CD4-positive, alpha-beta T cell (primary cell): ENCODE measurements at regions of chr12 and their contacts with region 1.

Region 1: DNA sequence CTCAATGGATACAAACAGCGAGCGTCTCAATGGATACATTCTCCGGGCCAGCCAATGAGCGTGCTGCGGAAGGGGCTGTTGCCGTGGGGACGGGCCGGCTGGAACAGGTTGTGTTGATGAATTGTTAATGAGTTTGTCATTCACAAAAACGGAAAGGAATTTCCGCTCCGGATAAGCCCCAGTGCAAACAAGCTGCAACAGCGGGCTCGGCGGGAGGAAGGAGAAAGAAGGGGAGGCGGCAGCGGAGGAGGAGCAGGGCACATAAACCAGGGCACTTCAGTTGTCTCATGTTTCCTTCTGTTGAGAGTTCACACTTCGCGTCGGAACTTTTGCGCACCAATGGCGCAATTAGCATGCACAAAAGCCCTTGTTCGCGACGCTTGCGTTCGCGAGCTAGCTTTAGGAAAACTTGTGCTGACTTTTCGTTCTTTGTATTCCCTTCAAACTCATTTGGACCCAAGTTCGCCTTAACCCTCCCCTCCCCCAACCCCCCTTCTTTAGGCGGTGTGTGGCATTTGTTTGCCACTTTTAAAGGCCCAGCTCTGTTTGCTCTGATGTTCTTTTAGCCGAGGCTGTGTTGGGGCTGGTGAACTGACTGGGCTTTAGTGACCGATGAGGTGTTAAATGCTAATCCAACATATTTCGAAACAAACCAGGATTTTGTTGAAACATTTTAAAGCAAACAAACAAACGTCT is at the start of gene DUSP6:
- DNase-seq: peak; percentile 64 to 93 (median 75)
- ATAC-seq: peak; percentile 76
- H3K4me3 ChIP-seq: peak within 1 kb of the TSS; percentile 78
- H3K4me3 Mint-ChIP-seq: peak within 1 kb of the TSS; percentile 94
- H3K27ac ChIP-seq: peak within 1 kb of the TSS in 1 of 2 donors; percentile 65
- H3K27ac Mint-ChIP-seq: peak within 1 kb of the TSS; percentile 88
- H3K4me1 ChIP-seq: peaks cover 51% of the 10 kb centered on the region
- H3K4me1 Mint-ChIP-seq: peaks cover 45% of the 10 kb centered on the region
- H3K27me3 ChIP-seq: no peaks in the 10 kb centered on the region
- H3K27me3 Mint-ChIP-seq: no peaks in the 10 kb centered on the region
- CTCF ChIP-seq: no peak
- total RNA-seq, gene DUSP6: 11.8 to 14.7 TPM

Region 2: DNA sequence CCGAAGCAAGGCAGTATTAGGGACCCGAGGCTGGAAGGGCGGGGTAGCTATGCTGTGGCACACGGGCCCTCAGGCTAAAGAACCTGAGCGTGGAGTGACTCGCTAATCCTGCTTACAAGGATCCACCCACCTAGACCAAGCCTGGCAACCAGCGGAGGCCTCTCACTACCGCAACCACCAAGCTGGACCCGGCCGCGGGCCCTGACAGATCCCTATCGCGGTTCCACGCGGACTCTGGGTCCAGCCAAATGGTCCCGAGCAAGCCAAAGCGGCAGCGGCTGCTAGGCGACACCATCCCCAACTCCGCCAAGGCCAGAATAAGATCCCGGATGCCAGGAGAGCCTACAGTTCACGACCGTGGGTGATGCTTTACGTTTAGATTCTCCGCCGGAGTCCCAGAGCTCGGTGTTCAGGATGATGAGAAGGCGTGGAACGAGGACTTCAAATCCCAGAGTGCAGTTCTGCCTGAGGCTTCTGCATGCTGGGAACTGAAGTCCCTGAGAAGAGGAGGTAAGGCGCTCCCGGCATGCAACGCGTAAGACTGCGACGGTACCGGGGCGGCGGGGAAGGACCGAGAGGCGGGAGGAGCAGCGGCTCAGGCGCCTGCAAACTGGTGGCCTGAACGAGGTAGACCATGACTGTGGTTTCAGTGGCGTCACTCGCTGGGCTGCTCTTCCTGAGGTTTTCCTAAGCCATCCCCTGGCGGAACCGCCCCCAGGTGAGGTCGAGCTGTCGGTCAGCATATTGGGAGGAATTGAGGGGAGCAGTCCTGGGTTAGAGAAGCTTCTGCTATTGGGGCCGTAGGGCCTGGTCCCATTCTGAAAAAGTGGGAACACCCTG is 1210.7 kb before region 1 on chr12 and contains the starts of genes CEP290 and TMTC3:
- CTCF ChIA-PET with region 1: no interaction called
- POLR2A ChIA-PET with region 1: no interaction called
- intact Hi-C with region 1: loop called in 1 of 2 experiments (anchors 5 kb)
- DNase-seq: peak; percentile 82 to 98 (median 88)
- ATAC-seq: peak; percentile 93
- H3K4me3 ChIP-seq: peak within 1 kb of the TSS; percentile 83
- H3K4me3 Mint-ChIP-seq: peak within 1 kb of the TSS; percentile 98
- H3K27ac ChIP-seq: peak within 1 kb of the TSS; percentile 82 to 84
- H3K27ac Mint-ChIP-seq: peak within 1 kb of the TSS; percentile 92
- H3K4me1 ChIP-seq: peaks cover 12% of the 10 kb centered on the region
- H3K4me1 Mint-ChIP-seq: peaks cover 69% of the 10 kb centered on the region
- H3K27me3 ChIP-seq: no peaks in the 10 kb centered on the region
- H3K27me3 Mint-ChIP-seq: no peaks in the 10 kb centered on the region
- CTCF ChIP-seq: no peak
- total RNA-seq, gene CEP290: 12.6 to 13.7 TPM
- total RNA-seq, gene TMTC3: 5.1 to 6.1 TPM

Region 3: DNA sequence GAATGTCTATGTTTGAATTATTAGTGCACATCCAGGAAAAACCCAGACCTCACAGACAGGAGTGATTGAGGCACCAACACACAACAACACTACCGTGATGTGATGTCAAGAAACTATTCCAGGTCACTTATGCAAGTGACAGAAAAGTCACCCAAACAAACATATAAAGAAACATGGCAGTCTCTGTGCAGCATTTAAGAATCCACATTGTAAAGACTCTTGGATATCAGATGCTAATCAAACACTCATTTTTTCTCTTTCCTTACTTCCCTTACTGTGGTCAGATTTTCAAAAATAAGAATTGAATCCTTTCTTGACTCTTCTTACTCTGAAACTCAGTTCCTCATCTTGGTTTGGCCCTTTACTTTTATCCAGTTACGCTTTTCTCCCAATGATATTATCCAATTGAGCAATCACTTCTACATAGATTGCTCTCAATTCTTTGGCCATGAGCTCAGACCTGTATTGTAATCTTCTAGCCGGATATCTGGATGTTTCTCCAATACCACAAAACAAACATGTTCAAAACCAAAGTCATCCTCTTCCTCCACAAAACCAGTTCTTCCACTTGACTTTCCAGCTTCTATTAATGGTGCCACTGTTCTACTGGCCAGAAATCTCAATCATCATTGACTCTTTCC is 115.8 kb before region 1 on chr12:
- CTCF ChIA-PET with region 1: no interaction called
- POLR2A ChIA-PET with region 1: interaction called, 7 read pairs
- intact Hi-C with region 1: loop called in 1 of 2 experiments (anchors 5 kb)
- DNase-seq: no peak
- ATAC-seq: no peak
- H3K4me3 ChIP-seq: no peak overlapping the region
- H3K4me3 Mint-ChIP-seq: peak overlapping the region; percentile 3
- H3K27ac ChIP-seq: no peak overlapping the region
- H3K27ac Mint-ChIP-seq: no peak overlapping the region
- H3K4me1 ChIP-seq: peaks cover 30% of the 10 kb centered on the region
- H3K4me1 Mint-ChIP-seq: peaks cover 85% of the 10 kb centered on the region
- H3K27me3 ChIP-seq: no peaks in the 10 kb centered on the region
- H3K27me3 Mint-ChIP-seq: no peaks in the 10 kb centered on the region
- CTCF ChIP-seq: no peak

Region 4: GRCh38 chr12:89280833-89281538 is 71.7 kb before region 1 on chr12:
- CTCF ChIA-PET with region 1: no interaction called
- POLR2A ChIA-PET with region 1: interaction called, 38 read pairs
- intact Hi-C with region 1: loop called (anchors 2 kb)
- DNase-seq: peak in 4 of 14 experiments; percentile 1 to 76 (median 46)
- ATAC-seq: peak; percentile 96
- H3K4me3 ChIP-seq: no peak overlapping the region
- H3K4me3 Mint-ChIP-seq: peak overlapping the region; percentile 50
- H3K27ac ChIP-seq: no peak overlapping the region
- H3K27ac Mint-ChIP-seq: peak overlapping the region; percentile 84
- H3K4me1 ChIP-seq: peaks cover 10% of the 10 kb centered on the region
- H3K4me1 Mint-ChIP-seq: peaks cover 48% of the 10 kb centered on the region
- H3K27me3 ChIP-seq: no peaks in the 10 kb centered on the region
- H3K27me3 Mint-ChIP-seq: no peaks in the 10 kb centered on the region
- CTCF ChIP-seq: no peak

Region 5: GRCh38 chr12:89524541-89525285 is 172.1 kb after region 1 on chr12 and contains the start of gene GALNT4:
- CTCF ChIA-PET with region 1: no interaction called
- POLR2A ChIA-PET with region 1: interaction called, 10 read pairs
- intact Hi-C with region 1: loop called in 1 of 2 experiments (anchors 5 kb)
- DNase-seq: peak; percentile 57 to 88 (median 68)
- ATAC-seq: peak; percentile 67
- H3K4me3 ChIP-seq: peak within 1 kb of the TSS; percentile 85
- H3K4me3 Mint-ChIP-seq: peak within 1 kb of the TSS; percentile 95
- H3K27ac ChIP-seq: peak within 1 kb of the TSS; percentile 80 to 84
- H3K27ac Mint-ChIP-seq: peak within 1 kb of the TSS; percentile 47
- H3K4me1 ChIP-seq: peaks cover 24% of the 10 kb centered on the region
- H3K4me1 Mint-ChIP-seq: peaks cover 58% of the 10 kb centered on the region
- H3K27me3 ChIP-seq: no peaks in the 10 kb centered on the region
- H3K27me3 Mint-ChIP-seq: no peaks in the 10 kb centered on the region
- CTCF ChIP-seq: peak; percentile 62
- total RNA-seq, gene GALNT4: 6.2 to 6.3 TPM